ENCODE measurements at regions of chr15 and their contacts with region 1.

Region 1: DNA sequence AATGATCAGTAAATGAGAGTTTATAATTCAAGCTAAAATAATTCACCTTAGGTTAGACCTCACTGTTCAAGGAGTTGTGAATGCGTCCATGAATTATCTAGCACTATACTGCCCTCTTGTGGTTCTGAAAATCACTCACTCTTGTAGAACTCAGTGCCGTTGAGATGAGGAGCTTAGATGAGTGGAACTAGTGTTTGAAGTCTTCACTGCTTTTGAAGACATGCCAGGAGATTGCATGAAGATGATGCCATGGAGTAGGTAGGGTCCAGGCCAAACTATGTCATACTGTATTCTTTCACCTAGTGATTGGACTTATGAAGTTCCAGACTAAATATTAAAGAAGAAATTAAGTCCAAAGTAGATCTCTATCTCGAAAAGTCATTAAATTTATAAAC is 28.8 kb downstream of the LYSMD4 start:
- DNase-seq: peak in 13 of 35 experiments; percentile 6 to 87 (median 24)
- ATAC-seq: peak; percentile 71 to 76 (median 74)
- H3K4me3 ChIP-seq: no peak overlapping the region
- H3K4me3 Mint-ChIP-seq: no peak overlapping the region
- H3K27ac ChIP-seq: no peak overlapping the region
- H3K27ac Mint-ChIP-seq: no peak overlapping the region
- H3K4me1 ChIP-seq: peaks cover 17 to 29% of the 10 kb centered on the region in 2 experiments
- H3K4me1 Mint-ChIP-seq: peaks cover 52 to 58% (median 54%) of the 10 kb centered on the region in 3 donors
- H3K27me3 ChIP-seq: no peaks in the 10 kb centered on the region
- H3K27me3 Mint-ChIP-seq: no peaks in the 10 kb centered on the region

Region 2: GRCh38 chr15:99275525-99276128 is 428.8 kb before region 1 on chr15:
- CTCF ChIA-PET with region 1: interaction called, 6 to 84 read pairs
- POLR2A ChIA-PET with region 1: interaction called in 1 of 2 experiments, 3 read pairs
- DNase-seq: no peak
- ATAC-seq: no peak
- H3K4me3 ChIP-seq: no peak overlapping the region
- H3K4me3 Mint-ChIP-seq: no peak overlapping the region
- H3K27ac ChIP-seq: no peak overlapping the region
- H3K27ac Mint-ChIP-seq: no peak overlapping the region
- H3K4me1 ChIP-seq: no peaks in the 10 kb centered on the region
- H3K4me1 Mint-ChIP-seq: peaks cover 19 to 26% (median 19%) of the 10 kb centered on the region in 3 donors
- H3K27me3 ChIP-seq: no peaks in the 10 kb centered on the region
- H3K27me3 Mint-ChIP-seq: no peaks in the 10 kb centered on the region

Region 3: DNA sequence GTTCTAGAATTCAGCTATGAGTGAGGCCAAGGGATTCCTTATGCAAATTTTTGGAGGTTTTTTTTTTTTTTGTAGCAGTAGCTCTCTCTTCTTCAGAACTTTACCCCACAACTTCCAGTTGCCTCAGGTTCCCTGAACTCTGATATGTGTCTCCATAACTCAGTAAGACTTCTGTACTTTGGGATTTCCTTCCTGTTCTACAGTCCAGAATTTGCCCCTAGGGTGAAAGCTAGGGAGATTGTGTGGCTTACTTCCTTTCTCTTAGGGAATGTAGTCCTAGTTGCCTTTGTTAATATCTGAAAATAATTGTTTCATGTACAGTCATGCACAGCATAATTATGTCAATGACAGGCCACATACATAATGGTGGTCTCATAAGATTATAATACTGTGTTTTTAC is 422.3 kb before region 1 on chr15:
- CTCF ChIA-PET with region 1: interaction called, 4 to 19 read pairs
- POLR2A ChIA-PET with region 1: interaction called in 1 of 2 experiments, 3 read pairs
- DNase-seq: no peak
- ATAC-seq: no peak
- H3K4me3 ChIP-seq: no peak overlapping the region
- H3K4me3 Mint-ChIP-seq: no peak overlapping the region
- H3K27ac ChIP-seq: no peak overlapping the region
- H3K27ac Mint-ChIP-seq: no peak overlapping the region
- H3K4me1 ChIP-seq: no peaks in the 10 kb centered on the region
- H3K4me1 Mint-ChIP-seq: peaks cover 18 to 32% (median 21%) of the 10 kb centered on the region in 3 donors
- H3K27me3 ChIP-seq: no peaks in the 10 kb centered on the region
- H3K27me3 Mint-ChIP-seq: no peaks in the 10 kb centered on the region

Region 4: GRCh38 chr15:99343881-99344551 is 360.4 kb before region 1 on chr15:
- CTCF ChIA-PET with region 1: interaction called, 14 to 51 read pairs
- POLR2A ChIA-PET with region 1: interaction called in 1 of 2 experiments, 3 read pairs
- DNase-seq: peak in 34 of 35 experiments; percentile 12 to 65 (median 44)
- ATAC-seq: peak; percentile 78 to 92 (median 83)
- H3K4me3 ChIP-seq: no peak overlapping the region
- H3K4me3 Mint-ChIP-seq: no peak overlapping the region
- H3K27ac ChIP-seq: no peak overlapping the region
- H3K27ac Mint-ChIP-seq: no peak overlapping the region
- H3K4me1 ChIP-seq: no peaks in the 10 kb centered on the region
- H3K4me1 Mint-ChIP-seq: peaks cover 4 to 10% (median 7%) of the 10 kb centered on the region in 3 donors
- H3K27me3 ChIP-seq: no peaks in the 10 kb centered on the region
- H3K27me3 Mint-ChIP-seq: no peaks in the 10 kb centered on the region

Region 5: GRCh38 chr15:99566157-99566897 is 138.1 kb before region 1 on chr15:
- CTCF ChIA-PET with region 1: interaction called in 1 of 2 experiments, 12 read pairs
- POLR2A ChIA-PET with region 1: no interaction called
- DNase-seq: peak in 12 of 35 experiments; percentile 0 to 42 (median 13)
- ATAC-seq: peak in 3 of 4 experiments; percentile 3 to 8 (median 5)
- H3K4me3 ChIP-seq: peak overlapping the region; percentile 97 to 99
- H3K4me3 Mint-ChIP-seq: peak overlapping the region; percentile 97 to 99 (median 98)
- H3K27ac ChIP-seq: peak overlapping the region; percentile 94
- H3K27ac Mint-ChIP-seq: peak overlapping the region; percentile 85 to 92
- H3K4me1 ChIP-seq: peaks cover 20 to 22% of the 10 kb centered on the region in 2 experiments
- H3K4me1 Mint-ChIP-seq: peaks cover 53 to 61% (median 57%) of the 10 kb centered on the region in 3 donors
- H3K27me3 ChIP-seq: no peaks in the 10 kb centered on the region
- H3K27me3 Mint-ChIP-seq: no peaks in the 10 kb centered on the region

Region 6: GRCh38 chr15:99733268-99734039 is 29.0 kb after region 1 on chr15 and contains the start of gene LYSMD4:
- CTCF ChIA-PET with region 1: interaction called, 8 to 34 read pairs
- POLR2A ChIA-PET with region 1: no interaction called
- DNase-seq: peak; percentile 95 to 99 (median 98)
- ATAC-seq: peak; percentile 98 to 100 (median 98)
- H3K4me3 ChIP-seq: peak within 1 kb of the TSS; percentile 71 to 86
- H3K4me3 Mint-ChIP-seq: peak within 1 kb of the TSS; percentile 82 to 85 (median 83)
- H3K27ac ChIP-seq: peak within 1 kb of the TSS; percentile 84
- H3K27ac Mint-ChIP-seq: peak within 1 kb of the TSS; percentile 91 to 96
- H3K4me1 ChIP-seq: peaks cover 2 to 21% of the 10 kb centered on the region in 2 experiments
- H3K4me1 Mint-ChIP-seq: peaks cover 20 to 27% (median 25%) of the 10 kb centered on the region in 3 donors
- H3K27me3 ChIP-seq: no peaks in the 10 kb centered on the region
- H3K27me3 Mint-ChIP-seq: no peaks in the 10 kb centered on the region
- total RNA-seq, gene LYSMD4: 12.6 to 26.5 (median 17.6) TPM

Region 7: GRCh38 chr15:99755692-99756409 is 51.4 kb after region 1 on chr15:
- CTCF ChIA-PET with region 1: interaction called, 17 to 25 read pairs
- POLR2A ChIA-PET with region 1: no interaction called
- DNase-seq: peak in 16 of 35 experiments; percentile 8 to 77 (median 20)
- ATAC-seq: peak; percentile 77 to 87 (median 82)
- H3K4me3 ChIP-seq: no peak overlapping the region
- H3K4me3 Mint-ChIP-seq: no peak overlapping the region
- H3K27ac ChIP-seq: no peak overlapping the region
- H3K27ac Mint-ChIP-seq: no peak overlapping the region
- H3K4me1 ChIP-seq: peaks cover 0 to 4% of the 10 kb centered on the region in 2 experiments
- H3K4me1 Mint-ChIP-seq: peaks cover 0 to 15% (median 5%) of the 10 kb centered on the region in 3 donors
- H3K27me3 ChIP-seq: no peaks in the 10 kb centered on the region
- H3K27me3 Mint-ChIP-seq: no peaks in the 10 kb centered on the region

Measured in T-cell (primary cell).